PC-3 (cell line): ENCODE measurements at regions of chr1 and their contacts with region 1.

Region 1: GRCh38 chr1:67853704-67854103 is 20.4 kb upstream of the GNG12 start:
- DNase-seq: peak; percentile 85
- ATAC-seq: peak; percentile 66
- H3K4me3 ChIP-seq: no peak overlapping the region
- H3K27ac ChIP-seq: no peak overlapping the region
- H3K4me1 ChIP-seq: peaks cover 17% of the 10 kb centered on the region
- H3K27me3 ChIP-seq: no peaks in the 10 kb centered on the region
- CTCF ChIP-seq: peak; percentile 97

Region 2: GRCh38 chr1:67760030-67760821 is 93.5 kb before region 1 on chr1:
- CTCF ChIA-PET with region 1: no interaction called
- POLR2A ChIA-PET with region 1: interaction called, 14 read pairs
- intact Hi-C with region 1: no loop called
- DNase-seq: peak; percentile 85
- ATAC-seq: peak; percentile 82
- H3K4me3 ChIP-seq: peak overlapping the region; percentile 9; the same call in 1 of the 2 replicates
- H3K27ac ChIP-seq: peak overlapping the region; percentile 45
- H3K4me1 ChIP-seq: peaks cover 32% of the 10 kb centered on the region
- H3K27me3 ChIP-seq: no peaks in the 10 kb centered on the region
- CTCF ChIP-seq: peak; percentile 88

Region 3: DNA sequence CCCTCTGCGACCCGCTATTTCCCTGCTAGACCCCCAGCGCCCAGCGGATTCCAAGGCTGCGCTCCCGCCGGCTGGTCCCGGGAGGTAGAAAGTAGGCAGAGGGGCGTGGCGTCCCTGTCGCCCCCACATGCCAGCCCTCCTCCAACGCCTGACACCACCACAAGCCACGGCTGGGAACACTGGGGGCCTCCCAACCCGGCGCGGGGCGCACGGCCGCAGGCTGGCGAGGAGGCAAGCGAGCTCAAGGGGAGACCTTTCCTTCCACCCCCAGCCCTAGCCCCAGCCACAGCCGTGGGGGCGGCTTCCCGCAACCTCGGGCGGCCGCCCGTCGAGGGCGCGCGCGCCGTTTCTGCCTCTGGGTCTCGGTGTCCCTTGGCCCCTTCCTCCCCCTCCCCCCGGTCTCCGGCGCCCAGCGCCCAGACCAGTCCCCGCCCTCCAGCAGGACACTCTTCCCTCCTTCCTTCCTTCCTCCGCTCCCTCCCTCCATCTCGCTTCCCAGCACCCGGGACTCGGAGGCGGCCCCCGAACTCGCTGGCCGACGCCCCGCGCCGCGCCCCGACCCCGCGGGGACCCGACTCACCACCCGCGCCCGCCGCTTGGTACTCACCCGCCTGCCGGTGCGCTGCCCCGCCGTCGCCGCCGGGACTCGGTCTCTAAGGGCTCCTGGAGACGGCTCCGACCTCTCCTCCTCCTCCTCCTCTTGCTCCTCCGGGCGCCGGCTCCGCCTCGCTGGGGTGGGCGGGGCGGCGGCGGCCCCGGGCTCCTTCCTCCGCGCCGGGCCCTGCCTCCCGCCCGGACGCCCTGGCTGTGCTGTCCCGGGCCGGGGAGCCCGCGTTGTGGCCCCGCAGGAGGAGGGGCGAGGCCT is 20.7 kb before region 1 on chr1 and contains the start of gene GNG12:
- CTCF ChIA-PET with region 1: no interaction called
- POLR2A ChIA-PET with region 1: interaction called, 4 read pairs
- intact Hi-C with region 1: loop called (anchors 1 kb)
- DNase-seq: peak; percentile 79
- ATAC-seq: peak; percentile 72
- H3K4me3 ChIP-seq: peak within 1 kb of the TSS; percentile 84
- H3K27ac ChIP-seq: peak within 1 kb of the TSS; percentile 81
- H3K4me1 ChIP-seq: peaks cover 21% of the 10 kb centered on the region
- H3K27me3 ChIP-seq: no peaks in the 10 kb centered on the region
- CTCF ChIP-seq: no peak
- total RNA-seq, gene GNG12: 54.1 and 66.1 TPM in 2 replicates

Region 4: GRCh38 chr1:68111519-68112436 is 258.1 kb after region 1 on chr1:
- CTCF ChIA-PET with region 1: interaction called, 6 read pairs
- POLR2A ChIA-PET with region 1: interaction called, 7 read pairs
- intact Hi-C with region 1: loop called (anchors 1 kb)
- DNase-seq: peak; percentile 79
- ATAC-seq: peak; percentile 72
- H3K4me3 ChIP-seq: no peak overlapping the region
- H3K27ac ChIP-seq: no peak overlapping the region
- H3K4me1 ChIP-seq: peaks cover 29% of the 10 kb centered on the region
- H3K27me3 ChIP-seq: no peaks in the 10 kb centered on the region
- CTCF ChIP-seq: peak; percentile 88